HEK293 (cell line): ENCODE measurements at regions of chr10 and their contacts with region 1.

Region 1: GRCh38 chr10:96089670-96090462 is 40.2 kb upstream of the ZNF518A start:
- H3K4me3 ChIP-seq: peak overlapping the region; percentile 82
- H3K27ac ChIP-seq: peak overlapping the region; percentile 87
- H3K4me1 ChIP-seq: no peaks in the 10 kb centered on the region
- CTCF ChIP-seq: peak; percentile 37; the same call in 1 of the 2 replicates

Region 2: GRCh38 chr10:96025566-96025965 is 64.3 kb before region 1 on chr10:
- CTCF ChIA-PET with region 1: no interaction called
- POLR2A ChIA-PET with region 1: no interaction called
- H3K4me3 ChIP-seq: no peak overlapping the region
- H3K27ac ChIP-seq: no peak overlapping the region
- H3K4me1 ChIP-seq: no peaks in the 10 kb centered on the region
- CTCF ChIP-seq: no peak

Region 3: DNA sequence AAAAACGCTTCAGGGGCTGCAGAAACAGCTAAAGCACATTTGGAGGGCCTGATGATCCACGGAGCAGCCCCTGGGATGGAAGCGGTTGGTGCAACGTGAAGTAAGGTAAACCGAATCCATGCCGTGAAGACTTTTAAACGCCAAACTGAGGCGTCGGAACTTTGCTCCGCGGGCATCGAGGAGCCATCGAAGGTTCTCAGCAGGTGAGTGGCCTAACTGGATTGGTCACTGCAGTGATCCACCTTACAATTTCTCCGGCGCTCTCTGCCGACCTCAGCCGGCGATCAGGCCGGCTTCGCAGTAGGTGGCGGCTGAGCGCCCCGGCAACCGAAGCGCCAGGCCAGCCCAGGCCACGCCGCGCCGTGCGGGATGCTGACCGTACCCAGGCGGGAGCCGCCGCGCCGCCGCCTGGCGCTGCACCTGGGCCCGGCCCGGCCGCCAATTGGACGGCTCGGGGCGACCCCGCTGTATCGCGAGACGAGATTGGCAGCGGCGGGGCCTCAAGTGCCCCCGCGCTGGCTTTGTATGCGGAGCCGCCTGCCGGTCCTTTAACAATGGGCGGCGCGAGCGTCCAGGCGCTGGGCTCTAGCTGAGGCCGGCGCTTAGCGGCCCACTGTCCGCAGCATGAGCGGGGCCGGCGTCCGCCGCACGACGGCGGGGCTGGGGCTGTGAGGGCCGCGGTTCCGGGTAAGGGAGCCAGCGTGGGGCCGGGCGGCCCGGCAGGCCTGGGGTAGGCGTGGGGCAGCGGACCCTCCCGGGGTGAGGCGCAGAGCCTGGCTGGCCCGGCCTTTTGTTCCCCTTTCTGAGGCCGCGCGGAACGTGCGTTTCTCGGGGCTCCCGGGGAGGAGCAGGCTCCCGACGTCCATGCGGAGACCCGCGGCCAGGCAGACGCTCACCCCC is 46.6 kb before region 1 on chr10 and contains the start of gene CCNJ:
- CTCF ChIA-PET with region 1: no interaction called
- POLR2A ChIA-PET with region 1: interaction called, 13 read pairs
- H3K4me3 ChIP-seq: peak within 1 kb of the TSS; percentile 65
- H3K27ac ChIP-seq: peak within 1 kb of the TSS; percentile 84
- H3K4me1 ChIP-seq: peaks cover 10% of the 10 kb centered on the region
- CTCF ChIP-seq: peak; percentile 21

Region 4: GRCh38 chr10:96107623-96108038 is 17.8 kb after region 1 on chr10:
- CTCF ChIA-PET with region 1: no interaction called
- POLR2A ChIA-PET with region 1: no interaction called
- H3K4me3 ChIP-seq: no peak overlapping the region
- H3K27ac ChIP-seq: no peak overlapping the region
- H3K4me1 ChIP-seq: no peaks in the 10 kb centered on the region
- CTCF ChIP-seq: no peak

Region 5: DNA sequence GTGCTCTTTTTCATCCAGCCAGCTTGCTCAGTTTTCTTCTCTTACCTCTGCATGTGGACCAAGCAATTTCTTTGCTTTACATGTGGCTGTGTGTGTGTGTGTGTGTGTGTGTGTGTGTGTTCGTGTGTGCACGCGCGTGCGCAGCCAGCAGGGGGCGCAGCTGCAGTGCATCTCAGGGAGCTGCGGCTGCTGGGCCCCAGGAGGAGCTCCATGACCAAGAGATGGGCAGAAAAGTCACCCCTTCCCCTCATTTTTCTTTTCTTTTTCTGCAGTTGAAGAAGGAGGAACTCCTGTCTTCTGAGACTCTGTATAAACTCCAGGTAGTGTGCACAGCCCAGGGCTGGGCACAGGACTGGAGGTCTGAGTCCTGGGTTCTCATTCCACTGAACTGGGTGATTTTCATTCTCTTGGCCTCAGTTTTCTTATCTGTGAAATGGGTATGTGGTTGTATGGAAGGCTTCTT is 139.7 kb after region 1 on chr10:
- CTCF ChIA-PET with region 1: no interaction called
- POLR2A ChIA-PET with region 1: no interaction called
- H3K4me3 ChIP-seq: no peak overlapping the region
- H3K27ac ChIP-seq: no peak overlapping the region
- H3K4me1 ChIP-seq: no peaks in the 10 kb centered on the region
- CTCF ChIP-seq: peak; percentile 99